OCI-LY7 (cell line): ENCODE measurements at regions of chr6 and their contacts with region 1.

Region 1: DNA sequence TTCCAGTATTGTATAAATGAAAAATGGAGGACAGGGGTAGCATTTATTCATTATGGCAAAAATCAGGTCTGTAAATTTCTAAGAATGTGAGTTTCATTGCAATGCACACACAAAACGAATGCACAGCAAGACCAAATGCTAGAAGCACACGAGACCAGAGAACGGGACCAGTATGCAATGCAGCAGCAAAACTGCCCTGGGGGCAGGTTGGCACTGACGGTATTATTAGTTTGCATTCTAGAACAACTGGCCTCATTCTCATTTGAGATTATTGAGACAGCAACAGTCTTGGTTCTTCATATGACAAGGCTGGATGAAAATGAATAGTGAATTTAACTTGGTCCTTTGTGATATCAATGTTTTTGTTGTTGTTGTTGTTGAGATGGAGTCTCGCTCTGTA is 9.0 kb upstream of the MTRES1 start:
- DNase-seq: no peak
- H3K4me3 ChIP-seq: no peak overlapping the region
- H3K27ac ChIP-seq: no peak overlapping the region
- H3K4me1 ChIP-seq: peaks cover 8% of the 10 kb centered on the region
- CTCF ChIP-seq: no peak

Region 2: DNA sequence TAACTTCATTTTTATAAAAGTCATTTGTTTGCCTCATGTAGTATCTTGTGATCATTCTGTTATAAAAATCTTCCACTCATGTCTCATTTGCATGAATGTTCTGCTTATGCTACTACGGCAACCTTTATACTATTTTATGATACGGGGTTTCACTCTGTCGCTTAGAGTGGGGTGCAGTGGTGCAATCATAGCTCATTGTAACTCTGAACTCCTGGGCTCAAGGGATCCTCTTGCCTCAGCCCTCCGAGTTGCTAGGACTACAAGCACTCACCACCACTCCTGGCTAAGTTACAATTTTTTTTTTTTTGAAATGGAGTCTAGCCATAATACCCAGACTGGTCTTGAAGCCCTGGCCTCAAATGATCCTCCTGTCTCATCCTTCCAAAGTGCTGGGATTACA is 1461.8 kb before region 1 on chr6:
- CTCF ChIA-PET with region 1: no interaction called
- POLR2A ChIA-PET with region 1: no interaction called
- intact Hi-C with region 1: loop called (anchors 5 kb)
- DNase-seq: no peak
- H3K4me3 ChIP-seq: no peak overlapping the region
- H3K27ac ChIP-seq: no peak overlapping the region
- H3K4me1 ChIP-seq: no peaks in the 10 kb centered on the region
- CTCF ChIP-seq: no peak

Region 3: GRCh38 chr6:106773484-106773913 is 245.5 kb before region 1 on chr6:
- CTCF ChIA-PET with region 1: no interaction called
- POLR2A ChIA-PET with region 1: no interaction called
- intact Hi-C with region 1: no loop called
- DNase-seq: no peak
- H3K4me3 ChIP-seq: no peak overlapping the region
- H3K27ac ChIP-seq: no peak overlapping the region
- H3K4me1 ChIP-seq: no peaks in the 10 kb centered on the region
- CTCF ChIP-seq: no peak

Region 4: GRCh38 chr6:106894978-106895702 is 123.9 kb before region 1 on chr6:
- CTCF ChIA-PET with region 1: no interaction called
- POLR2A ChIA-PET with region 1: no interaction called
- intact Hi-C with region 1: no loop called
- DNase-seq: peak; percentile 20
- H3K4me3 ChIP-seq: no peak overlapping the region
- H3K27ac ChIP-seq: no peak overlapping the region
- H3K4me1 ChIP-seq: no peaks in the 10 kb centered on the region
- CTCF ChIP-seq: no peak

Region 5: DNA sequence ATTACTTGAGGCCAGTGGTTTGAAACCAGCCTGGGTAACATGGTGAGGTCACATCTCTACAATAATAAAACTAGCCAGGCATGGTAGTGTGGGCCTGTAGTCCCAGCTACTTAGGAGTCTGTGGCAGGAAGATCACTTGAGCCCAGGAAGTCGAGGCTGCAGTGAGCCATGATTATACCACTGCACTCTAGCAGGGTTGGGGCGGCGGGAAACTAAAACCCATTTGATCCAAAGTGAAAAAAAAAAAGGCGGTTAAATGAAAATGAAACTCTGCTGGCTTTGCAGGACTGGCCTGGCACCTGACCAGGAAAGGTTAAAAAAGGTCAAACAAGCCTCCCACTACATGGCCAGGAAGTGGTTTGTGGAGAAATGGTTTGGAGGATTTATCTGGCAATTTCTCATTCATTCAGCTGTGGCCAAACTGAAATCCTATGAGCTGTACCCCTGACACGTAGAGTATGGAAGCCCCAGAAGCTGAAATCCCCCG is 45.6 kb after region 1 on chr6:
- CTCF ChIA-PET with region 1: no interaction called
- POLR2A ChIA-PET with region 1: no interaction called
- intact Hi-C with region 1: no loop called
- DNase-seq: no peak
- H3K4me3 ChIP-seq: no peak overlapping the region
- H3K27ac ChIP-seq: no peak overlapping the region
- H3K4me1 ChIP-seq: peaks cover 20% of the 10 kb centered on the region
- CTCF ChIP-seq: no peak